ENCODE measurements at regions of chr10 and their contacts with region 1.

Region 1: GRCh38 chr10:86521678-86522509 is at the start of gene WAPL:
- DNase-seq: peak; percentile 91
- ATAC-seq: peak; percentile 92
- H3K4me3 ChIP-seq: peak within 1 kb of the TSS; percentile 96
- H3K27ac ChIP-seq: peak within 1 kb of the TSS; percentile 50
- H3K4me1 ChIP-seq: peaks cover 18% of the 10 kb centered on the region
- H3K27me3 ChIP-seq: no peaks in the 10 kb centered on the region
- CTCF ChIP-seq: no peak
- total RNA-seq, gene WAPL: 24.5 and 26.0 TPM in 2 replicates

Region 2: DNA sequence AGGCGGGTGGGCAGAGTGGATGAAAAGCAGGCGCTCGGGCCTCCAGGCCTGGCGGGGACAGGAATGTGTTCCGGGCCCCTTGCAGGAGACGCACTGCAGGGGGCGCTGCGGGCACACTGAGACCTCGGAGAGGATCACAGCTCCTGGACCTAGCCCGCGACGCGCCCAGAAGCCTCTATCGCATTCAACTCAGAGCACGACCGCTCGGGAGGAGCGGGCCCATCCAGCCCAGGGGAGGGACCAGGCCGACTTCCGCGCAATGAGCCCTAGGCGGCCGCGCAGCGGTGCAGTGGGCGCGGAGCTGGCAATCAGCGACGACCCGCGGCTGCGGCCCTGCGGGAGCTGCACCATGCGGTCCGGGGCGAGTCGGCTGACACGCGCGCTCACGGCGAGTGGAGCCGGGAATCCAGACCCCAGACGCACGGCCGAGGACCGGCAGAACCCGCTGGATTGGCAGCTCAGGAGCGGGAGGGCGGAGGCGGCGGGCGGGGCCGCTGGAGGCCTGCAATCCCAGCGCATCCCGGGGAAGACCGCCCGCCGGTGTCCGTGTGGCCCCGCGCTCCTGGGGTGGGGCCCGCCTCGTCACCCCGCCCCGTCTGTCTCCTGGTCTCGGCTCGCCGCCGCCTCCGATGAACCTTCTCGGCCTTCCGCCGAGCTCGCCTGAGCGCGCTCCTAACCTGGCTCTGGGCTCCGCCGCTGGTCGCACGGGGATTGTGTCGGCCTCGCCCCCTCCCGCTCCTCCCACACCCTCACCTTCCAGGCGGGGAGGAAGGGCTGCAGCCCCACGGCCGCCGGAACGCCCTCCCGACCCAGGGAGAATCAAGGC is 121.8 kb before region 1 on chr10:
- CTCF ChIA-PET with region 1: interaction called, 3 read pairs
- POLR2A ChIA-PET with region 1: no interaction called
- intact Hi-C with region 1: loop called (anchors 1 kb)
- DNase-seq: peak; percentile 90
- ATAC-seq: peak; percentile 94
- H3K4me3 ChIP-seq: peak overlapping the region; percentile 82
- H3K27ac ChIP-seq: peak overlapping the region; percentile 48
- H3K4me1 ChIP-seq: peaks cover 10% of the 10 kb centered on the region
- H3K27me3 ChIP-seq: no peaks in the 10 kb centered on the region
- CTCF ChIP-seq: peak; percentile 76

Region 3: DNA sequence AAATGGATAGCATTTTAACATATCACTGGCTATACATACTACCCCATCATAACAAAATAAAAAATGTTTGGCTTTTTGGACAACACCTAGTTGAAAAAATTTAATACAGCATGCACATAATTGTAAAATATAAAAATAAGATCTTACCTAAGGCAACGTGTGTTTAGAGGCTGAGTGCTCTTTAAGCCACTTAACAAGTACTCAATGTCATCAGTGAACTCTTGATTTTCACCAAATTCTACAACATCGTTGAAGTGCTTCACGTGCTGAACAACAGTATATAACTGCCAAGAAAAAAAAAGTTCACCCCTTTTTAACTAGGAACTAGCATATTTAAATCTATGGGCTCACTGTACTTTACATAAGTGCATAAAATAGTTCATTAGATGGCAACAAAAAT is 49.8 kb before region 1 on chr10:
- CTCF ChIA-PET with region 1: no interaction called
- POLR2A ChIA-PET with region 1: interaction called, 26 read pairs
- intact Hi-C with region 1: no loop called
- DNase-seq: no peak
- ATAC-seq: no peak
- H3K4me3 ChIP-seq: no peak overlapping the region
- H3K27ac ChIP-seq: no peak overlapping the region
- H3K4me1 ChIP-seq: no peaks in the 10 kb centered on the region
- H3K27me3 ChIP-seq: no peaks in the 10 kb centered on the region
- CTCF ChIP-seq: no peak

Region 4: GRCh38 chr10:86585037-86585725 is 63.3 kb after region 1 on chr10:
- CTCF ChIA-PET with region 1: interaction called, 3 read pairs
- POLR2A ChIA-PET with region 1: no interaction called
- intact Hi-C with region 1: loop called (anchors 1 kb)
- DNase-seq: peak; percentile 79
- ATAC-seq: peak; percentile 89
- H3K4me3 ChIP-seq: no peak overlapping the region
- H3K27ac ChIP-seq: no peak overlapping the region
- H3K4me1 ChIP-seq: no peaks in the 10 kb centered on the region; the same call in 1 of the 2 replicates
- H3K27me3 ChIP-seq: no peaks in the 10 kb centered on the region
- CTCF ChIP-seq: peak; percentile 90

Region 5: DNA sequence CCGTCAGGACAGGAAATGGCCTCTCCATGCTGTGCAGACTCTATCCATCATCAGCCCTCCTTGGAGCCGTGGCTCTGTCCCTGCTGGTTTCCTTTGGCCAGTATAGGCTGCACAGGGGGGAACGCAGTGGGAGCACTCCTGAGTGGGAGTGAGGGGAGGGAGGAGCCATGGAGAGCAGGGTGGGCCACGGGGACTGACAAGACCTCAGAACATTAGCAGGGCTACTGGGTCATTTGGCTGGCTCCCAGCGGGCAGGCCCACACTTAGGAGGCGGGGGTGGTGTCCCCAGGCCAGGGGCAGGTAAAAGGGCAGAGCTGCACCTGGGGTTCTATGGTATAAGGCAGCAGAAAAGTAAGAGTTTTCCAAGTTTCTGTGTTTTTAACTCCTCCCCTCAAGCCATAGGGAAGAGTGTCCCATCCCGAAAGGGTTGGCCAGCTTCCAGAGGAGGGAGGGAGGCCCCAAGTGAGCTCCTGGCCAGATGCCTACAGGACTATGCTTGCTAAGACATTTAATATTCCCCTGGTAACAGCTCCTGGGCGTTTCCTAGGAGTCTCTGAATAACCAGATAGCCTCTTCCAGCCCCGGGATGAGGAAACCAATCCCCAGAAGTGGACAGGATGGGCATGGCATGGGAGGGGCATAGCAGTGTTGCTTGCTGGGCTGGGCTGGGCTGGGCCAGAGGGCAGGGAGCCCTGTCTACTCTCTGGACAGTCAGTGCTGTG is 127.0 kb after region 1 on chr10:
- CTCF ChIA-PET with region 1: no interaction called
- POLR2A ChIA-PET with region 1: no interaction called
- intact Hi-C with region 1: loop called (anchors 5 kb)
- DNase-seq: peak; percentile 92
- ATAC-seq: peak; percentile 92
- H3K4me3 ChIP-seq: no peak overlapping the region
- H3K27ac ChIP-seq: peak overlapping the region; percentile 36; the same call in 1 of the 2 replicates
- H3K4me1 ChIP-seq: peaks cover 32% of the 10 kb centered on the region
- H3K27me3 ChIP-seq: no peaks in the 10 kb centered on the region
- CTCF ChIP-seq: no peak

Region 6: GRCh38 chr10:86688398-86688921 is 166.6 kb after region 1 on chr10:
- CTCF ChIA-PET with region 1: interaction called, 9 read pairs
- POLR2A ChIA-PET with region 1: no interaction called
- intact Hi-C with region 1: loop called (anchors 5 kb)
- DNase-seq: peak; percentile 62
- ATAC-seq: peak; percentile 77
- H3K4me3 ChIP-seq: no peak overlapping the region
- H3K27ac ChIP-seq: no peak overlapping the region
- H3K4me1 ChIP-seq: no peaks in the 10 kb centered on the region
- H3K27me3 ChIP-seq: no peaks in the 10 kb centered on the region
- CTCF ChIP-seq: peak; percentile 70

Measured in PC-3 (cell line).